ENCODE measurements at regions of chr13 and their contacts with region 1.

Region 1: GRCh38 chr13:25971459-25972145 is 80.2 kb downstream of the SHISA2 start:
- DNase-seq: peak; percentile 76
- H3K4me3 Mint-ChIP-seq: no peak overlapping the region
- H3K27ac Mint-ChIP-seq: peak overlapping the region; percentile 46
- H3K4me1 Mint-ChIP-seq: peaks cover 42% of the 10 kb centered on the region
- H3K27me3 Mint-ChIP-seq: no peaks in the 10 kb centered on the region

Region 2: DNA sequence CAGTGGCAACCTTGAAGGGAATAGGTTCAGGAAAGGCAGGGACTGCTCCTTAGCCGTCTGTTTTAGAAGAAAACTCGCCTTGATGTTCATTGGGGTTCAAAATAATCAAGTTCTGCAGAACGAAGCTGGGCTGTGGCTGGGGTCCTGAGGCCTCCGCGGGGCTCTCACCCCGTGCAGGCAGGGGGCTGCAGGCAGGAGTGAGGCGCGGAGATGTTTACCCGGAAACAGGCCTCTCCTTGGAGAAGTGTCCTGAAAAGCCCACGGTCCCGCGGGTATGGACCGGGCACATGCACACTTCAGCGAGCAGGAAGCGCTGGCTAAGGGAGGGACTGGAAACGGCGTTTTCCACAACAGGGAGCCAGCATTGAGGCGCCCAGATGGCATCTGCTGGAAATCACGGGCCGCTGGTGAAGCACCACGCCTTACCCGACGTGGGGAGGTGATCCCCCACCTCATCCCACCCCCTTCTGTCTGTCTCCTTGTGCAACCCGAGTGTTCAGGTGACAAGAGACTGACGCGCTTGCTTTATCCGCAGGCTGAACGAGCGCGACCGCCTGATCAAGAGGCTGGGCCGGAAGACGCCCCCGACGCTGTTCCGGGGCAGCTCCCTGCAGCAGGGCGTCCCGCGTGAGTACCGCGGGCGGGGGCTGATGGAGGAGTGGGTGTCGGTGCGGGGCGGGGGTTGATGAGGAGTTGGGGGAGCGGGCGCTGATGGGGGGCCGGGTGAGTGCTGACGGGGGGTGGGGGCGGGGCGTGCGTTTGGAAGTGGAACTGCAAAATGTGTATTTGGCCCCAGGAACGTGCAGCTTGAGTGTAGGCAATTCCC is 40.6 kb after region 1 on chr13:
- CTCF ChIA-PET with region 1: no interaction called
- intact Hi-C with region 1: loop called (anchors 2 kb)
- DNase-seq: peak; percentile 70
- H3K4me3 Mint-ChIP-seq: peak overlapping the region; percentile 74
- H3K27ac Mint-ChIP-seq: peak overlapping the region; percentile 72
- H3K4me1 Mint-ChIP-seq: peaks cover 25% of the 10 kb centered on the region
- H3K27me3 Mint-ChIP-seq: no peaks in the 10 kb centered on the region

Region 3: GRCh38 chr13:26051657-26052311 is 80.2 kb after region 1 on chr13 and contains the start of gene SHISA2:
- CTCF ChIA-PET with region 1: no interaction called
- intact Hi-C with region 1: loop called (anchors 2 kb)
- DNase-seq: peak; percentile 34
- H3K4me3 Mint-ChIP-seq: peak within 1 kb of the TSS; percentile 66
- H3K27ac Mint-ChIP-seq: no peak within 1 kb of the TSS
- H3K4me1 Mint-ChIP-seq: peaks cover 19% of the 10 kb centered on the region
- H3K27me3 Mint-ChIP-seq: peaks cover 15% of the 10 kb centered on the region
- total RNA-seq, gene SHISA2: 0.52 to 0.69 TPM

Region 4: GRCh38 chr13:26325876-26326275 is 354.3 kb after region 1 on chr13:
- CTCF ChIA-PET with region 1: no interaction called
- intact Hi-C with region 1: no loop called
- DNase-seq: no peak
- H3K4me3 Mint-ChIP-seq: no peak overlapping the region
- H3K27ac Mint-ChIP-seq: no peak overlapping the region
- H3K4me1 Mint-ChIP-seq: peaks cover 53% of the 10 kb centered on the region
- H3K27me3 Mint-ChIP-seq: no peaks in the 10 kb centered on the region

Region 5: DNA sequence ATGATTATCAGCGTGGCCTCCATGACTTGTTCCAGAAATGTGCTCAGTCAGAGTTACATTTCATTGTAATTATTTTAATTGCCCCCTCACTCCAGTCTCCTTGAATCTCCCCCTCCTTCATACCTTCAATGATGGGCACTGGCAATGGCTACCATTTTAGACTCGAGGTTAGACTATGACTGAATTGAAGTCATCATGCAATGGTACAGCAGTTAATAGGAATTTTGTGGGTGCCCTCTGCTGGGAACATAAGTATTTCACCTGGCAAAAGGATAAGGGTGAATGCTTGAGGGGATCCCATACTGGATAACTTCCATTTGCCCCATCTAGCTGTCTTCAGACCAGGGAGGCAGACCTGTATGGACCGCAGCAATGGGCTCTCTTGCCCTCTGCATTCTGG is 1232.3 kb after region 1 on chr13:
- CTCF ChIA-PET with region 1: no interaction called
- intact Hi-C with region 1: no loop called
- DNase-seq: peak; percentile 28
- H3K4me3 Mint-ChIP-seq: no peak overlapping the region
- H3K27ac Mint-ChIP-seq: no peak overlapping the region
- H3K4me1 Mint-ChIP-seq: no peaks in the 10 kb centered on the region
- H3K27me3 Mint-ChIP-seq: no peaks in the 10 kb centered on the region

Measured in activated naive CD4-positive, alpha-beta T cell treated with anti-CD3 and anti-CD28 coated beads for 36 hours (primary cell).